ENCODE measurements at regions of chr12 and their contacts with region 1.

Region 1: DNA sequence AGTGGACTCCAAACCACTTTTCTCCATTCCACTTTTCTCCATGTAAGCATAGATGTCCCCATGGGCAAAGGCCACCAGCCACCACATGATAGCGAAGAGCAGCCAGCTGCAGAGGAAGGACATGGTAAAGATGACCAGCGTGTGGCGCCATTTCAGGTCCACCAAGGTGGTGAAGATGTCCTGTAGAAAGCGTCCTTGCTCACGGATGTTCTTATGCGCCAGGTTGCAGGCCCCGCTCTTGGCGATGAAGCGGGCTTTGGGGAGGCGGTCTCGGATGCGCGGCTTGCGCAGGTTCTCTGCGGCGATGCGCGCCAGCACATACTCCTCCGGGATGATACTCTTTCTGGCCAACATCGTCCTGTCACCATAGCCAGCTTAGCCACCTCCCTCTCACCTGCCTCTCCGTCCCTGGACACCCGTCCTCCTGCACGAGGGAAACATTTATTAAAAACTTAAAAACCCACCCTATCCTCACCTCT is 1.2 kb downstream of the KCNJ8 start:
- DNase-seq: peak; percentile 64 to 84 (median 79)
- ATAC-seq: peak; percentile 38 to 47
- H3K4me3 ChIP-seq: peak overlapping the region; percentile 97
- H3K27ac ChIP-seq: peak overlapping the region; percentile 5
- H3K4me1 ChIP-seq: peaks cover 4% of the 10 kb centered on the region
- H3K27me3 ChIP-seq: no peaks in the 10 kb centered on the region

Region 2: GRCh38 chr12:21940549-21941505 is 167.5 kb after region 1 on chr12 and contains the start of gene ABCC9:
- intact Hi-C with region 1: loop called in 2 of 4 experiments (anchors 2 to 5 kb)
- DNase-seq: peak; percentile 62 to 88 (median 86)
- ATAC-seq: peak; percentile 88 to 92
- H3K4me3 ChIP-seq: peak within 1 kb of the TSS; percentile 75
- H3K27ac ChIP-seq: peak within 1 kb of the TSS; percentile 86
- H3K4me1 ChIP-seq: no peaks in the 10 kb centered on the region
- H3K27me3 ChIP-seq: no peaks in the 10 kb centered on the region
- total RNA-seq, gene ABCC9: 46.5 to 67.8 (median 56.7) TPM